Dendritic cell treated with granulocyte-macrophage colony-stimulating factor and Interleukin-4, amounts not matched to agents 40 ng/mL and 50 ng/mL, for 4 days (primary cell): ENCODE measurements at regions of chr7 and their contacts with region 1.

Region 1: DNA sequence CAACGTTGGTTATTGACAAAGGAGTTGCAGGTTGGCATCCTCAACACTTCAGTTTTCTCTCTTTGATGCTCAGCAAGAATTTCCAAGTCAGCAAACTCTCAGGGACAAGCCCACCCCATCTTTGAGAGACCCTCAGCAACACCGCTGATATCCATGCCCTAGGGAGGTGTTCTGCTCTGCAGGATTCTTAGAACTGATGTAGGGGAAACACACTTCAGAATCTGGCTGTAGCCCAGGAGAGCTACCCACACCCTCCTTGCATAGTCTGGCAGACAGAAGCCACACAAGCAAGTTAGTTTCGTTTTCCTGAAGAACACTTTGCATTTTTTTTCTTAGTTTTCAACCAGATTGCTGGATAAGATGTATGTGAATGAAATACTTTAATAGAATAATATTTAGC is 822 bp downstream of the SAMD9L start:
- H3K4me3 Mint-ChIP-seq: peak overlapping the region; percentile 79
- H3K27ac Mint-ChIP-seq: peak overlapping the region; percentile 90
- H3K4me1 Mint-ChIP-seq: peaks cover 53% of the 10 kb centered on the region
- H3K27me3 Mint-ChIP-seq: no peaks in the 10 kb centered on the region

Region 2: GRCh38 chr7:92633211-92633906 is 514.0 kb before region 1 on chr7:
- intact Hi-C with region 1: loop called (anchors 5 kb)
- H3K4me3 Mint-ChIP-seq: no peak overlapping the region
- H3K27ac Mint-ChIP-seq: peak overlapping the region; percentile 80
- H3K4me1 Mint-ChIP-seq: peaks cover 35% of the 10 kb centered on the region
- H3K27me3 Mint-ChIP-seq: no peaks in the 10 kb centered on the region

Region 3: GRCh38 chr7:93117852-93118530 is 29.4 kb before region 1 on chr7 and contains the start of gene SAMD9:
- intact Hi-C with region 1: loop called (anchors 2 kb)
- H3K4me3 Mint-ChIP-seq: peak within 1 kb of the TSS; percentile 81
- H3K27ac Mint-ChIP-seq: peak within 1 kb of the TSS; percentile 73
- H3K4me1 Mint-ChIP-seq: peaks cover 54% of the 10 kb centered on the region
- H3K27me3 Mint-ChIP-seq: no peaks in the 10 kb centered on the region

Region 4: GRCh38 chr7:94040254-94040653 is 892.9 kb after region 1 on chr7:
- intact Hi-C with region 1: no loop called
- H3K4me3 Mint-ChIP-seq: no peak overlapping the region
- H3K27ac Mint-ChIP-seq: no peak overlapping the region
- H3K4me1 Mint-ChIP-seq: peaks cover 11% of the 10 kb centered on the region
- H3K27me3 Mint-ChIP-seq: peaks cover 27% of the 10 kb centered on the region